ENCODE measurements at regions of chr3 and their contacts with region 1.

Region 1: GRCh38 chr3:108406661-108407206 is 103.7 kb downstream of the MYH15 start:
- DNase-seq: peak; percentile 37 to 70
- H3K4me3 ChIP-seq: no peak overlapping the region
- H3K27ac ChIP-seq: no peak overlapping the region
- H3K4me1 ChIP-seq: peaks cover 7% of the 10 kb centered on the region
- H3K27me3 ChIP-seq: no peaks in the 10 kb centered on the region
- CTCF ChIP-seq: peak; percentile 93

Region 2: DNA sequence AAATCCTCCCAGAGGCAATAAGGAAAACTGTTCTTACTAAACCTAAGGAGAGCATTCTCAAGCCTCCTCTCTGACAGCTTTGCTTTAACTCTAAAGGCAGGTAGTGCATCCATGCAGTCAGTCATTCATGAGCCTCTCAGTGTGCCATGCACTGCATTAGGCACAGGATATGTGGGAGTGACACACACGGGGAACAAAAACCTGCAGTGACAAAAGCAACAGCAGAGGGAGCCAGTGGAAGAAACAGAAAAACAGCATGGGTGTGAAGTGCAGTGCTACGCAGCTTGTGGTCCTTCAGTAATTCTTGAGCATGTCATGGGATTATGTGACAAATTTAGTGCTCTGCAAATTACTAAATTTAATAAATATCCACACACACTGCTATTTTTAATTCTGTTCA is 653.3 kb before region 1 on chr3:
- CTCF ChIA-PET with region 1: no interaction called
- POLR2A ChIA-PET with region 1: no interaction called
- intact Hi-C with region 1: loop called (anchors 10 kb)
- DNase-seq: peak in 1 of 2 experiments; percentile 11
- H3K4me3 ChIP-seq: no peak overlapping the region
- H3K27ac ChIP-seq: no peak overlapping the region
- H3K4me1 ChIP-seq: no peaks in the 10 kb centered on the region
- H3K27me3 ChIP-seq: no peaks in the 10 kb centered on the region
- CTCF ChIP-seq: peak; percentile 67

Region 3: GRCh38 chr3:107927361-107928083 is 479.2 kb before region 1 on chr3:
- CTCF ChIA-PET with region 1: no interaction called
- POLR2A ChIA-PET with region 1: no interaction called
- intact Hi-C with region 1: loop called (anchors 1 kb)
- DNase-seq: peak; percentile 74 to 79
- H3K4me3 ChIP-seq: peak overlapping the region; percentile 65
- H3K27ac ChIP-seq: no peak overlapping the region
- H3K4me1 ChIP-seq: no peaks in the 10 kb centered on the region
- H3K27me3 ChIP-seq: no peaks in the 10 kb centered on the region
- CTCF ChIP-seq: peak; percentile 99

Region 4: GRCh38 chr3:107987036-107987947 is 419.4 kb before region 1 on chr3:
- CTCF ChIA-PET with region 1: no interaction called
- POLR2A ChIA-PET with region 1: no interaction called
- intact Hi-C with region 1: loop called (anchors 5 kb)
- DNase-seq: peak; percentile 81 to 97
- H3K4me3 ChIP-seq: no peak overlapping the region
- H3K27ac ChIP-seq: peak overlapping the region; percentile 83
- H3K4me1 ChIP-seq: peaks cover 56% of the 10 kb centered on the region
- H3K27me3 ChIP-seq: no peaks in the 10 kb centered on the region
- CTCF ChIP-seq: no peak

Region 5: GRCh38 chr3:108090701-108091451 is 315.9 kb before region 1 on chr3 and contains the start of gene CD47:
- CTCF ChIA-PET with region 1: no interaction called
- POLR2A ChIA-PET with region 1: no interaction called
- intact Hi-C with region 1: loop called (anchors 2 kb)
- DNase-seq: peak; percentile 72 to 97
- H3K4me3 ChIP-seq: peak within 1 kb of the TSS; percentile 93
- H3K27ac ChIP-seq: 0 out of 2 replicates have a peak within 1 kb of the TSS, but pooled peaks have one; percentile 0
- H3K4me1 ChIP-seq: peaks cover 32% of the 10 kb centered on the region
- H3K27me3 ChIP-seq: no peaks in the 10 kb centered on the region
- CTCF ChIP-seq: no peak
- total RNA-seq, gene CD47: 74.8 and 76.9 TPM in 2 replicates

Region 6: GRCh38 chr3:108221911-108222852 is 184.6 kb before region 1 on chr3 and contains the start of gene IFT57:
- CTCF ChIA-PET with region 1: no interaction called
- POLR2A ChIA-PET with region 1: no interaction called
- intact Hi-C with region 1: loop called (anchors 5 kb)
- DNase-seq: peak; percentile 98 to 99
- H3K4me3 ChIP-seq: peak within 1 kb of the TSS; percentile 85
- H3K27ac ChIP-seq: peak within 1 kb of the TSS; percentile 28
- H3K4me1 ChIP-seq: peaks cover 27% of the 10 kb centered on the region
- H3K27me3 ChIP-seq: no peaks in the 10 kb centered on the region
- CTCF ChIP-seq: no peak
- total RNA-seq, gene IFT57: 55.2 and 65.7 TPM in 2 replicates

Region 7: DNA sequence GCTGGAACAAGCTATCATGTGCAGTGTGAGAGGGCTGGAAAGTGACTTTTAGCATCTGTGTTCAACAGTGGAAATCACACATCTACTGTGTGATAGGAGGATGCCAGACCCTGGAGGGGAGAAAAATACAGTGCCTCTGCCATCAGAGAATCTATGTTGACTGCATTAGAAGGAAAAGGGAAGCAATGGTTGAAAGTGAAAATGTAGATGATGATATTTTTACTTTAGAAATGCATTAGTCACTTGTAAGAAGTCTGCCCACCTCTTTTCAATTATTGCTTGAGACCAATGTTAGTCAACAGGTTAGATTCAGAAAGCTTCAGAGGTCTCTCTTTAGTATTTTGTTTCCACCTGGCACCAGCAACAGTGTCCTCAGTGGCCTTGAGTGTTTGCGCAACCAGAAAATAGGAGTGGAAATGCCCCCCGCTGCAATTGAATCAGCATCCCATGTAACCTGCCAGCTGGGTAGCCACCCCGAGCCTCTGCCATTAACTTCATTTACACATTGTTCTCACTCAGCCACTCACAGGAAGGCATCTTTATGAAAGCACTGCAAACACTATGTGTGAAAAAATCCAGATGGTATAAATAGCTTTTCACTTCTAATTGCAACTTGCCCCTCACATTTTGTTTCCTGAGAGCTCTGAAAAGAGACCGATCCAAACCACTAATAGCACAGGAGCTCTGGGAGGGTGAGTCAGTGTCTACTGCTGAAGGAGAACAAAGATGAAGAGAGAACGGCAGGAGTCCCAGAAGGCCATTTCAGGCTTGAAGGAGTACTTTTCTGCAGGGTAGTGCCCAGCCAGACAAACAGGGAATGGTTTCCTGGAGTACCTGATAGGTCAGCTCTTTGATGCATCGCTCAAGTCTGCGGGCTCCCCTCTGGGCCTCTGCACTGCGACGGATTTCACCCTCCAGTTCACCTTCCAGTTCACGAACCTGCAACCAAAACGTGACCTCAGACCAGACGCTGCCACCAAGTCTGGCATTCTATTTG is 18.3 kb before region 1 on chr3:
- CTCF ChIA-PET with region 1: no interaction called
- POLR2A ChIA-PET with region 1: no interaction called
- intact Hi-C with region 1: no loop called
- DNase-seq: no peak
- H3K4me3 ChIP-seq: no peak overlapping the region
- H3K27ac ChIP-seq: no peak overlapping the region
- H3K4me1 ChIP-seq: 0 out of 2 replicates have a peak, but pooled peaks cover 5% of the 10 kb centered on the region
- H3K27me3 ChIP-seq: no peaks in the 10 kb centered on the region
- CTCF ChIP-seq: no peak

Region 8: DNA sequence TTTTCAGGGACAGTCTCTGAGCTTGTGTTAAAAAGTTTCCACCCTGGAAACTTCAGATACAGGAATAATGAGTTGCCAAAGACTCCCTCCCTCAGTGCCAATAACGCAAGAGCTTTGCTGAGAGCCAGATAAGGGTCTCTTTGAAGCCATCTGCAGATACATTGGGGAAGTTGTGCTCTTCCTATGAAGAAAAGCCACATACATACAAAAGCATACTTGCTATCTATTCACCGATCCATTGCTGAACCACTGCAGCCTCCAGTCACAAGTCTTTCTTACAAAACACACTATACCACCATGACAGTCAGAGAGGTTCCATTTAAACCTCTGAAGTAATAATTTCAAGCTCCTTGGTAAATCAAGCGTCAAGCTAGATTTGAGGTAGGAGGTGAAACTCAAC is 360.5 kb after region 1 on chr3:
- CTCF ChIA-PET with region 1: no interaction called
- POLR2A ChIA-PET with region 1: no interaction called
- intact Hi-C with region 1: no loop called
- DNase-seq: no peak
- H3K4me3 ChIP-seq: no peak overlapping the region
- H3K27ac ChIP-seq: no peak overlapping the region
- H3K4me1 ChIP-seq: no peaks in the 10 kb centered on the region
- H3K27me3 ChIP-seq: 0 out of 2 replicates have a peak, but pooled peaks cover 6% of the 10 kb centered on the region
- CTCF ChIP-seq: no peak

Measured in PC-9 (cell line).